ENCODE measurements at regions of chr2 and their contacts with region 1.

Region 1: DNA sequence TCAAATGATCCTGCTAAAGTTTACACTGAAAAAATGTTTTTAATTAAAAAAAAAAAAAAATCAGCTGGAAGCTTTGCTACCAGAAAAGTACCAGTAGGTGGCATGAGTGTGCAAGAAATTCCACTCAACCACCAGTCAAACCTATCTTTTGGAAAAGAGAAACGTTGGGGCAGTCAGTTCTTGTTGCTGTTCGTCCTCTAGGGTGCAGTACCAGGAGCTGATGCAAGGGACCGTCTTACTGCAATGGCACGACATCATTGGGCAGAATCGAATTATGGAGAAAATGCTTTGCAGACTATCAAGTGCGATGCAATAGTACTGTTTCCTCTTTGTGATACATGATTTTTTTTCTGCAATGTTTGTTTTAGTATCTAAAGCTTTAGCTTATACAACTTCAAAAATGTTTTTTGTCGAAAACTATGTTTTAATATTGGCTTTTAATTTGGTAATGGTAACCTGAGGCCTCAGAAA is 18.3 kb downstream of the YPEL5 start:
- DNase-seq: peak; percentile 88 to 90 (median 90)
- ATAC-seq: peak; percentile 100
- H3K4me3 ChIP-seq: no peak overlapping the region
- H3K27ac ChIP-seq: no peak overlapping the region
- H3K4me1 ChIP-seq: no peaks in the 10 kb centered on the region
- H3K27me3 ChIP-seq: no peaks in the 10 kb centered on the region; a peak in 1 of 5 replicates
- CTCF ChIP-seq: peak; percentile 94 to 99 (median 98)
- EP300 ChIP-seq: 0 out of 2 replicates have a peak, but pooled peaks have one; percentile 32
- POLR2A ChIP-seq: no peak
- RAD21 ChIP-seq: peak; percentile 90 to 92

Region 2: DNA sequence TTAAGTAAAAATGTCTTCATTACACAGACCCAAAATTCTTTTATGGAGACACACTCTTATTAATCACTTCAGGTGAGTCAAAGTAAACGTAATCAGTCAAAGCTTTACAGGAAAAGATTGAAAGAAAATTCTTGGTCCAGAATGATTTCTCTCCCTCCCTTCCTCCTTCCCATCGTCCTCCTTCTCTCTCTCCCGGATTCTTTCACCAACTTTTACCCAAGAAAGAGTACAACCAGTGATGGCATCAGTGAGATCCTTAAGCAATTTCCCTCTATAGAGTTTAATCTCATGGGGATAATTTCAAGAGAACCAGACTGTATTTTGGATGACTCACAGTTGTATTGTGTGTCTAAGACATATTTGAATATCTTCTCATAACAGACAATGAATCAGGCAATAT is 501.8 kb before region 1 on chr2:
- CTCF ChIA-PET with region 1: no interaction called
- POLR2A ChIA-PET with region 1: no interaction called
- in situ Hi-C with region 1: no loop called
- intact Hi-C with region 1: no loop called
- DNase-seq: no peak
- ATAC-seq: no peak
- H3K4me3 ChIP-seq: no peak overlapping the region
- H3K27ac ChIP-seq: no peak overlapping the region
- H3K4me1 ChIP-seq: no peaks in the 10 kb centered on the region
- H3K27me3 ChIP-seq: no peaks in the 10 kb centered on the region
- CTCF ChIP-seq: no peak
- EP300 ChIP-seq: no peak
- POLR2A ChIP-seq: no peak
- RAD21 ChIP-seq: no peak

Region 3: GRCh38 chr2:30146438-30147147 is 18.5 kb before region 1 on chr2 and contains the start of gene YPEL5:
- CTCF ChIA-PET with region 1: no interaction called
- POLR2A ChIA-PET with region 1: interaction called, 15 read pairs
- in situ Hi-C with region 1: no loop called
- intact Hi-C with region 1: no loop called
- DNase-seq: peak; percentile 96 to 98 (median 96)
- ATAC-seq: peak; percentile 97
- H3K4me3 ChIP-seq: peak within 1 kb of the TSS; percentile 86
- H3K27ac ChIP-seq: peak within 1 kb of the TSS; percentile 91
- H3K4me1 ChIP-seq: peaks cover 5 to 34% of the 10 kb centered on the region in 2 experiments
- H3K27me3 ChIP-seq: 0 out of 5 replicates have a peak, but pooled peaks cover 0 to 2% of the 10 kb centered on the region in 2 experiments
- CTCF ChIP-seq: no peak
- EP300 ChIP-seq: no peak
- POLR2A ChIP-seq: peak; percentile 74
- RAD21 ChIP-seq: no peak
- polyA plus RNA-seq, gene YPEL5: 19.0 to 23.8 TPM

Region 4: GRCh38 chr2:30208452-30208851 is 43.4 kb after region 1 on chr2:
- CTCF ChIA-PET with region 1: interaction called, 13 read pairs
- POLR2A ChIA-PET with region 1: interaction called, 7 read pairs
- in situ Hi-C with region 1: loop called (anchors 5 kb)
- intact Hi-C with region 1: loop called (anchors 1 kb)
- DNase-seq: peak; percentile 53 to 75 (median 66)
- ATAC-seq: peak; percentile 91
- H3K4me3 ChIP-seq: no peak overlapping the region
- H3K27ac ChIP-seq: no peak overlapping the region
- H3K4me1 ChIP-seq: peaks cover 2 to 3% of the 10 kb centered on the region in 2 experiments; a peak in 2 of 5 replicates
- H3K27me3 ChIP-seq: no peaks in the 10 kb centered on the region
- CTCF ChIP-seq: peak; percentile 83 to 93 (median 89)
- EP300 ChIP-seq: no peak
- POLR2A ChIP-seq: no peak
- RAD21 ChIP-seq: peak; percentile 95 to 97